ENCODE measurements at regions of chr16 and their contacts with region 1.

Region 1: DNA sequence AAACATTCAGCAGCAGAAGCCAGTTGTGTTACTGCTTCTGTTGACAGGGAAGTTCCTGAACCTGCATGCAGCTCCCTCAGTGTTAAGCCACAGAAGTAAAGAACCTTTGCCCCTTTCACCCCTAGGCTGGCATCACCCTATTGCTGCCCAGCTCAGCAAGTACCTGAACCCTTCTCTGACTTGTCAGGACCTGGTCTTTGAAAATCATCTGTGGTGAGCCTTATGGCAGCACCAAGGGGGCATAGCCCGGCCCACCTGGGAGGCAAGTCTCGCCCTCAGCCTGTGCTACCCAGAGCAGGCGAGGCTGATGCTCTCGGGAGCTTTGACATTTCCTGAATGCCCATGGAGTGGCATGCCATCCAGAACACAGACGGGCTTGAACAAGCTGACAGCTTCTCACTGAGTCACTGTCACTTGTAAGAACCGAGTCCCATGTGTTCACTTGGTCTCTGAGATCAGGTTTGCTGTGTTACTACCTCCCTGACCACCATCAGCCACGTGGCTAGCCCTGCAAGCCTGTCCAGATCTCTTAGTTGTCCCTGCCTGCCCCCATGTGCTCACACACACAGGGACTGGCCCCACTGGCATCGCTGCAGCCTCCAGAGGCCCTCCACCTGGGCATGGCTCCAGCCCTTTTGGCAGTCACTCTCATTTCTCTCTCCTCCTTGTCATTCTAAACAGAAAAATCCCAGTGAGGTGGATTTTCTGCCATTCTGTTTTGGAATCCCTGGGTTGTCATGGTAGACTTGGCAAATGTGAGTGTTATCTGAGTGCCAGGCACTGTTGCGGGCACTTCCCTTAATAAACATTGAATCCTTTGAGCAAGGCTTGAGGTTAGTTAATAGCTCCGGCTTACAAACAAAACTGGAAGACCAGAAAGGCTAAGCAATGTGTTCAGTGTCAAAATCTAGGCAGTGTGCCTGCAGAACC is 2.9 kb upstream of the CARMIL2 start:
- DNase-seq: no peak
- ATAC-seq: no peak
- H3K4me3 ChIP-seq: no peak overlapping the region
- H3K27ac ChIP-seq: no peak overlapping the region
- H3K4me1 ChIP-seq: peaks cover 11% of the 10 kb centered on the region; the same call in 1 of the 2 replicates
- H3K27me3 ChIP-seq: no peaks in the 10 kb centered on the region
- CTCF ChIP-seq: no peak
- EP300 ChIP-seq: no peak
- POLR2A ChIP-seq: no peak
- RAD21 ChIP-seq: no peak

Region 2: GRCh38 chr16:67459066-67459860 is 182.8 kb before region 1 on chr16:
- CTCF ChIA-PET with region 1: no interaction called
- POLR2A ChIA-PET with region 1: no interaction called
- RAD21 ChIA-PET with region 1: no interaction called
- SMC1A ChIA-PET with region 1: no interaction called
- in situ Hi-C with region 1: no loop called
- intact Hi-C with region 1: no loop called
- DNase-seq: no peak
- ATAC-seq: no peak
- H3K4me3 ChIP-seq: no peak overlapping the region
- H3K27ac ChIP-seq: no peak overlapping the region
- H3K4me1 ChIP-seq: no peaks in the 10 kb centered on the region
- H3K27me3 ChIP-seq: no peaks in the 10 kb centered on the region
- CTCF ChIP-seq: no peak
- EP300 ChIP-seq: no peak
- POLR2A ChIP-seq: no peak
- RAD21 ChIP-seq: no peak

Region 3: GRCh38 chr16:67490335-67491096 is 151.5 kb before region 1 on chr16:
- CTCF ChIA-PET with region 1: interaction called, 18 read pairs
- POLR2A ChIA-PET with region 1: interaction called, 5 read pairs
- RAD21 ChIA-PET with region 1: interaction called, 10 read pairs
- SMC1A ChIA-PET with region 1: interaction called, 6 read pairs
- in situ Hi-C with region 1: no loop called
- intact Hi-C with region 1: no loop called
- DNase-seq: no peak
- ATAC-seq: no peak
- H3K4me3 ChIP-seq: no peak overlapping the region
- H3K27ac ChIP-seq: no peak overlapping the region
- H3K4me1 ChIP-seq: peaks cover 12% of the 10 kb centered on the region
- H3K27me3 ChIP-seq: no peaks in the 10 kb centered on the region
- CTCF ChIP-seq: no peak
- EP300 ChIP-seq: no peak
- POLR2A ChIP-seq: no peak
- RAD21 ChIP-seq: no peak

Region 4: DNA sequence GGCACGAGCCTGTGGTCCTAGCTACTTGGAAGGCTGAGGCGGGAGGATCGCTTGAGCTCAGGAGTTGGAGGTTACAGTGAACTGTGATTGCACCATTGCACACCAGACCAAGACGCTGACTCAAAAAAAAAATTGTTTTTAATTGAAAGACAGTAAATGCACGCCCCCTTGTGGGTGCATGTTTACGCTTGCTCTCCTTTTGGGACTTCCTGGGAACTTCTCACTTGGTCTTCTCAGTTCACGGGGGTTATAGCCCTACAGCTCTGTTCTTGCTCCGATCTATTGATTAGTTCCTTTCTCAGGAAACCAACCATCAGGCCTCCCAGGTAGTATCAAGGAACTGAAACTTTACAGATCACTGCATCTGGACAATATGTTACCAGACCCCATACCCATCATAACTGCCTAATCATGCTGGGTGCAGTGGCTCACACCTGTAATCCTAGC is 127.6 kb before region 1 on chr16:
- CTCF ChIA-PET with region 1: interaction called, 88 read pairs
- POLR2A ChIA-PET with region 1: no interaction called
- RAD21 ChIA-PET with region 1: interaction called, 8 read pairs
- SMC1A ChIA-PET with region 1: interaction called, 4 read pairs
- in situ Hi-C with region 1: no loop called
- intact Hi-C with region 1: no loop called
- DNase-seq: peak; percentile 90
- ATAC-seq: peak; percentile 71
- H3K4me3 ChIP-seq: no peak overlapping the region
- H3K27ac ChIP-seq: peak overlapping the region; percentile 38; the same call in 1 of the 2 replicates
- H3K4me1 ChIP-seq: peaks cover 45% of the 10 kb centered on the region
- H3K27me3 ChIP-seq: no peaks in the 10 kb centered on the region
- CTCF ChIP-seq: peak; percentile 66 to 82 (median 71); a peak in 5 of 6 replicates
- EP300 ChIP-seq: no peak
- POLR2A ChIP-seq: no peak
- RAD21 ChIP-seq: peak; percentile 77

Region 5: GRCh38 chr16:67546761-67547422 is 95.2 kb before region 1 on chr16:
- CTCF ChIA-PET with region 1: interaction called, 138 read pairs
- POLR2A ChIA-PET with region 1: interaction called, 10 read pairs
- RAD21 ChIA-PET with region 1: interaction called, 102 read pairs
- SMC1A ChIA-PET with region 1: interaction called, 86 read pairs
- in situ Hi-C with region 1: loop called (anchors 5 kb)
- intact Hi-C with region 1: loop called (anchors 1 kb)
- DNase-seq: no peak
- ATAC-seq: peak; percentile 74
- H3K4me3 ChIP-seq: no peak overlapping the region
- H3K27ac ChIP-seq: peak overlapping the region; percentile 87
- H3K4me1 ChIP-seq: peaks cover 28% of the 10 kb centered on the region
- H3K27me3 ChIP-seq: no peaks in the 10 kb centered on the region
- CTCF ChIP-seq: peak; percentile 98 to 99 (median 98); a peak in 5 of 6 replicates
- EP300 ChIP-seq: no peak
- POLR2A ChIP-seq: peak; percentile 18; the same call in 1 of the 2 replicates
- RAD21 ChIP-seq: peak; percentile 92

Region 6: GRCh38 chr16:67561824-67562525 is 80.1 kb before region 1 on chr16:
- CTCF ChIA-PET with region 1: interaction called, 38 read pairs
- POLR2A ChIA-PET with region 1: interaction called, 11 read pairs
- RAD21 ChIA-PET with region 1: interaction called, 48 read pairs
- SMC1A ChIA-PET with region 1: interaction called, 13 read pairs
- in situ Hi-C with region 1: no loop called
- intact Hi-C with region 1: loop called (anchors 1 kb)
- DNase-seq: peak; percentile 89
- ATAC-seq: peak; percentile 91
- H3K4me3 ChIP-seq: peak overlapping the region; percentile 74
- H3K27ac ChIP-seq: peak overlapping the region; percentile 87
- H3K4me1 ChIP-seq: peaks cover 15% of the 10 kb centered on the region
- H3K27me3 ChIP-seq: no peaks in the 10 kb centered on the region
- CTCF ChIP-seq: no peak
- EP300 ChIP-seq: 0 out of 4 replicates have a peak, but pooled peaks of 1 of the 2 experiments have one; percentile 10
- POLR2A ChIP-seq: peak; percentile 83
- RAD21 ChIP-seq: no peak

Region 7: GRCh38 chr16:67660564-67661028 is 18.6 kb after region 1 on chr16 and contains the start of gene PARD6A:
- CTCF ChIA-PET with region 1: interaction called, 24 read pairs
- POLR2A ChIA-PET with region 1: interaction called, 16 read pairs
- RAD21 ChIA-PET with region 1: interaction called, 17 read pairs
- SMC1A ChIA-PET with region 1: interaction called, 7 read pairs
- in situ Hi-C with region 1: no loop called
- intact Hi-C with region 1: no loop called
- DNase-seq: peak; percentile 87
- ATAC-seq: peak; percentile 84
- H3K4me3 ChIP-seq: peak within 1 kb of the TSS; percentile 92
- H3K27ac ChIP-seq: peak within 1 kb of the TSS; percentile 80
- H3K4me1 ChIP-seq: peaks cover 10% of the 10 kb centered on the region
- H3K27me3 ChIP-seq: no peaks in the 10 kb centered on the region
- CTCF ChIP-seq: no peak
- EP300 ChIP-seq: no peak
- POLR2A ChIP-seq: no peak
- RAD21 ChIP-seq: no peak
- polyA plus RNA-seq, gene PARD6A: 0.42 to 0.62 TPM

Region 8: DNA sequence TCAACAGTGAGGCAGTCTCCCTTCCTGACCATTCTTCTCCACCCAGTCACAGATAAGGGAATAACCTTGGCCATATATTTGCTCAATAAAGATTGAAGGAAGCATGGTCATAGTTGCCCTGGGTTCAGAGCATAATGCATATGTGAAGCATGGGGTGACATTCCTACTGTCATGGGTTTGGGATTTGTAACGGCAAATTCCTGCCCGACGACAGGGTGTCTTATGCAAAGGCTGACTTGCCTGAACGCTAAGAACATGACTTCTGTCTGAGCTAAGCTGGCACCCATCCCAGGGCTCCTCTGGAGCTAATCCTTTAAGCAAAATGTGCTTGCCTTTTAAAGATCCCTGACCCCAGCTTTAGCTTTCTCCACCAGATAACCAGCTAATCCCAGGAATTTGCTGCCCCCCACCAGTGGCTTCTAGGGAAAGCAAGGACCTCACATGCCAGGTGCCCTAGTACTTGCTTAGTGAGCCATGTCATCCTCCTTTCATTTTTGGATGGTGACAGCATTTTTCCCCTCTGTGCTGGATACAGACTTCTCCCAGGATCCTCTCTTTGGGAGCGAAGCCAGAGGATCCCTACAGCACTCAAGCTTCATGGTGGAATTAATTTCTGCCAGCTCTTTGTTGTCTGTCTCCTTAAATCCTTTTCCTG is 657.0 kb after region 1 on chr16:
- CTCF ChIA-PET with region 1: no interaction called
- POLR2A ChIA-PET with region 1: no interaction called
- RAD21 ChIA-PET with region 1: no interaction called
- SMC1A ChIA-PET with region 1: no interaction called
- in situ Hi-C with region 1: no loop called
- intact Hi-C with region 1: no loop called
- DNase-seq: no peak
- ATAC-seq: no peak
- H3K4me3 ChIP-seq: no peak overlapping the region
- H3K27ac ChIP-seq: no peak overlapping the region
- H3K4me1 ChIP-seq: no peaks in the 10 kb centered on the region
- H3K27me3 ChIP-seq: no peaks in the 10 kb centered on the region
- CTCF ChIP-seq: no peak
- EP300 ChIP-seq: no peak
- POLR2A ChIP-seq: 0 out of 2 replicates have a peak, but pooled peaks have one; percentile 8
- RAD21 ChIP-seq: no peak

Measured in GM12878 (cell line).